ENCODE measurements at regions of chr6 and their contacts with region 1.

Region 1: GRCh38 chr6:47097092-47097945 is 55.2 kb upstream of the ADGRF1 start:
- DNase-seq: peak; percentile 77
- H3K4me3 ChIP-seq: no peak overlapping the region
- H3K27ac ChIP-seq: no peak overlapping the region
- H3K4me1 ChIP-seq: peaks cover 8% of the 10 kb centered on the region
- H3K27me3 ChIP-seq: no peaks in the 10 kb centered on the region
- CTCF ChIP-seq: peak; percentile 58 to 62
- POLR2A ChIP-seq: no peak

Region 2: DNA sequence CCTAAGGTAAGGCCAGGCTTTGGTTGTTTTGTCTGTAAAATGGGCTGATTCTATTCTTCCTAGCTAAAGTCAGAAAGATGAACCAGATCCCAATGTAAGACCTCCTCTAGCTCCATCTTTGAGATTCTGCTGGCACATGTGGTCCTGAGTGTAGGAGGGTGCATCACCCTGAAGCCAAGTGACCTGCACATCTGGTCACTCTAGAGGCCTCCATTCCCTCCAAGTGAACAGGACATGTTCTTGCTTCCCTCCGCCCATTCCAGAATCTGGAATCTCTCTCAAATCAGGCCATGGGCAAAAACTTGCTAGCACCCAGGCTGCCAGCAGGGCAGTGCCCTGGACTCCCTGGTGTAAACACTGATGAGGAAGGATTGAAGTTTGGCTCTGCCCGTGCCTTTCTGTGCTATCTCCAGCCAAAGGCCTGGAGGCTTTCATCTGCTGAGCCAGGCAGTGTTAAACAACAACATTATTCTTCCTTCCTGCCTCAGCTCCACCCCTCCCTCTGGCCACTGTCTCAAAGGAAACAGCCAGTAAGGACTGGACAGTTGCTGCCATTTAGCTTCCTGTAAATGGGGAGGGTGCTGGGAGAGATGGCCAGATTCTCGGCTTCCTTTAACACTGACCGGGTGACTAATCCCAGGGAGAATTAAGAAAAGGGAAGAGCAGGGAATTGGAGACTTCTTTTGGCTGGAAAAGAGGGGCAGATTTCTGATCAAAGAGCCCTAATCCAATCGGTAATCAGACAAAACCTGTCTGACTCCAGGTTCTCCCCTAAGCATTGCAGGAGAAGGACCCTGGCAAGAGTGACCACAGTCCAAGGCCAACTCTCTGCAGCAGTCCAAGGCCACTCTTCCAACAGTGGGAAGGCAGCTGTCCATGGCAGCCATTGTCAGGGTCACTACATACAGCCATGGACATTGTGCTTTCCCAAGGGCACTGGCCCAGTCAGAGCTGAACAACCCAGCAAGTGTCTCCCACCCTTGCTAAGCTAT is 35.7 kb before region 1 on chr6:
- CTCF ChIA-PET with region 1: no interaction called
- POLR2A ChIA-PET with region 1: no interaction called
- dilution Hi-C with region 1: no loop called
- intact Hi-C with region 1: no loop called
- DNase-seq: peak; percentile 50
- H3K4me3 ChIP-seq: no peak overlapping the region
- H3K27ac ChIP-seq: no peak overlapping the region
- H3K4me1 ChIP-seq: peaks cover 11% of the 10 kb centered on the region
- H3K27me3 ChIP-seq: no peaks in the 10 kb centered on the region
- CTCF ChIP-seq: no peak
- POLR2A ChIP-seq: no peak

Region 3: DNA sequence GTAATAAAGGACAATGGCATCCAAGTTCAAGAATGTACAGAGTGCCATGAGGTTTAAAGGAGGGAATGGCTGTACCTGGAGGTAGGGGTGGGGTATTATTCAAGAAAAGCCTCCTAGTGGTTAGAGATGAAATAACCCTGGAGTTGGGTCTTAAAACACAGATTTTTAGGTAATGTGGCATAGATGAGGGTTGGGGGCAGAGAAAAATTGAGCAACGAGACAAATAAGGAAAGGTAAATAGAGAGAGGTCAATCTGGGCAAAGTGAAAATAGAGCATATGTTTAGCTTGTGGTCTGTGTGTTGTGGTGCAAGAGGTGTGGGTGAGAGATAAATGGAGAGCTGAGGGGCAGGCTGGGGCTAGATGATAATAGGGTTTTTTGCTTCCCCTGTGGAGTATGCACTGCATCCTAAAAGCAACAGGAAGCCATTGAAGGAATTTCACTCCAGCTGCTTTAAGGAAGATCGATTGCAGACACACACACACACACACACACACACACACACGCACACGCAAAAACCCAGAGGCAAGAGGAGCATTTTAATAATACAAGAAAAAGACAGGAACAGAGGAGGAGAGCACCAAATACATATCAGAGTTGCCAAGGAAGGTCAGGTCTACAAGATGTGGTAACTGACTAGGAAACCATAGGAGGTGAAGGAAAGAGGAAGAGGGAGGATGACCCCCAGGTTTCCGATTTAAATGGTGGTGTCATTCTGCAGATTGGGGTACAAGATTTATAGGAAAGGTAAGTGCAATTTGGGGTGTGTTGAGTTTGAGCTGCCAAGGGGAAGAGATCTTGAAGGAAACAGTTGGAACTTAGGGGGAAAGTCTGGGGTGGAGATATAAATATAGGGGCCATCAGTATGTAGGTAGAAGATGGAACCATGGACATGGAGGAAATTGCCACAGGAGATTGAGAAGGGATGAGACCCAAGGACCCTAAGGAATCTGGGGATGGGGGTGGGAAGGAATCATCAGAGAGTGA is 23.9 kb before region 1 on chr6:
- CTCF ChIA-PET with region 1: no interaction called
- POLR2A ChIA-PET with region 1: no interaction called
- dilution Hi-C with region 1: no loop called
- intact Hi-C with region 1: no loop called
- DNase-seq: no peak
- H3K4me3 ChIP-seq: no peak overlapping the region
- H3K27ac ChIP-seq: no peak overlapping the region
- H3K4me1 ChIP-seq: no peaks in the 10 kb centered on the region
- H3K27me3 ChIP-seq: peaks cover 7 to 15% of the 10 kb centered on the region in 2 experiments
- CTCF ChIP-seq: peak; percentile 20 to 25
- POLR2A ChIP-seq: no peak

Region 4: GRCh38 chr6:47134476-47135189 is 37.3 kb after region 1 on chr6:
- CTCF ChIA-PET with region 1: interaction called, 5 read pairs
- POLR2A ChIA-PET with region 1: interaction called, 3 read pairs
- dilution Hi-C with region 1: no loop called
- intact Hi-C with region 1: loop called (anchors 2 kb)
- DNase-seq: peak; percentile 92
- H3K4me3 ChIP-seq: peak overlapping the region in 1 of 3 experiments; percentile 34
- H3K27ac ChIP-seq: peak overlapping the region; percentile 94
- H3K4me1 ChIP-seq: peaks cover 26% of the 10 kb centered on the region
- H3K27me3 ChIP-seq: no peaks in the 10 kb centered on the region
- CTCF ChIP-seq: no peak
- POLR2A ChIP-seq: no peak

Region 5: DNA sequence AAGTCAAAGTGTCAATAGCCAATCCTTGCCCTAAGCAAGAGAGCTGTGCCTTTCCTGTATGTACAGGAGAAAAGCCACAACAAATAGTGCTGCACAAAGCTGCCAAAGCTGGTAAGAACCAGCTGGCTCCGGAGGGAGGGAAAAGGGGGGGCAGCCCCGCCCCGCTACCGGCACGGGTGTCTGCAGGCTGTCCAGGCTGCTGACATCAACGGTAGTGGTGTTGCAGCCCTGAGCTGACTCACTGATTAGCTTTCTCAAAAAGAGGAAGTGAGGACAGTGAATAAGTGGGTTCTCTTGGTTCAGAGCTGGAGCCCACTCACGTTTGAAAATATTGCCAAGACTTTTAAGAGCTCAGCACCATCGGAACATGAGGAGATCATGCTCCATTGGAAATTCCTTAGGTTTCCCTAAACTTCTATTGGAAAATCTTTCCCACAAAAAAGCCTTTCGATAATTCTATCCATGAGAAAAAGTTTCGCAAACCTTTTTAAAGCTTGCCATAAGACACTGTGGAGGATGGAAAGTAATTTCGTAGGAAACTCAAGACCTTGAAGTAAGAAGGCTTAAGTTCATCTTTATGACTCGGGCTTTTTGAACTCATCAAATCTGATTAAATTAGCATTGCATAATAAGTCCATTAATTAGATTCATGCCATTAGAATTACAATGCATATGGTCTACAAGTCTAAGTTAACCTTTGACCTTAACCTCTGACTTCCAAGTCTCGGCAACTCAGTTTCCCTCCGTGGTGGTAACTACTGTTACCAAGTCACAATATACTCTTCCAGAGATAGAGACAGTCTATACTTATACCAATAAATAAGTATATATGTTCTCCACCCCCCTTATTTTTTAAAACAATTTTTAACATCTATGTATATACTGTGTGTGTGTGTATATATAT is 145.4 kb after region 1 on chr6:
- CTCF ChIA-PET with region 1: interaction called, 4 read pairs
- POLR2A ChIA-PET with region 1: no interaction called
- dilution Hi-C with region 1: loop called (anchors 25 kb)
- intact Hi-C with region 1: loop called (anchors 5 kb)
- DNase-seq: peak; percentile 95
- H3K4me3 ChIP-seq: no peak overlapping the region
- H3K27ac ChIP-seq: peak overlapping the region; percentile 51
- H3K4me1 ChIP-seq: peaks cover 14% of the 10 kb centered on the region
- H3K27me3 ChIP-seq: no peaks in the 10 kb centered on the region
- CTCF ChIP-seq: no peak
- POLR2A ChIP-seq: no peak

Region 6: GRCh38 chr6:47264775-47265184 is 167.5 kb after region 1 on chr6:
- CTCF ChIA-PET with region 1: interaction called, 3 read pairs
- POLR2A ChIA-PET with region 1: no interaction called
- dilution Hi-C with region 1: no loop called
- intact Hi-C with region 1: loop called (anchors 1 kb)
- DNase-seq: peak; percentile 97
- H3K4me3 ChIP-seq: no peak overlapping the region
- H3K27ac ChIP-seq: peak overlapping the region; percentile 76
- H3K4me1 ChIP-seq: peaks cover 63% of the 10 kb centered on the region
- H3K27me3 ChIP-seq: no peaks in the 10 kb centered on the region
- CTCF ChIP-seq: no peak
- POLR2A ChIP-seq: no peak

Region 7: GRCh38 chr6:47428746-47429664 is 331.7 kb after region 1 on chr6:
- CTCF ChIA-PET with region 1: no interaction called
- POLR2A ChIA-PET with region 1: no interaction called
- dilution Hi-C with region 1: no loop called
- intact Hi-C with region 1: no loop called
- DNase-seq: no peak
- H3K4me3 ChIP-seq: no peak overlapping the region
- H3K27ac ChIP-seq: no peak overlapping the region
- H3K4me1 ChIP-seq: no peaks in the 10 kb centered on the region
- H3K27me3 ChIP-seq: peaks cover 0 to 2% of the 10 kb centered on the region in 2 experiments
- CTCF ChIP-seq: no peak
- POLR2A ChIP-seq: no peak

Region 8: DNA sequence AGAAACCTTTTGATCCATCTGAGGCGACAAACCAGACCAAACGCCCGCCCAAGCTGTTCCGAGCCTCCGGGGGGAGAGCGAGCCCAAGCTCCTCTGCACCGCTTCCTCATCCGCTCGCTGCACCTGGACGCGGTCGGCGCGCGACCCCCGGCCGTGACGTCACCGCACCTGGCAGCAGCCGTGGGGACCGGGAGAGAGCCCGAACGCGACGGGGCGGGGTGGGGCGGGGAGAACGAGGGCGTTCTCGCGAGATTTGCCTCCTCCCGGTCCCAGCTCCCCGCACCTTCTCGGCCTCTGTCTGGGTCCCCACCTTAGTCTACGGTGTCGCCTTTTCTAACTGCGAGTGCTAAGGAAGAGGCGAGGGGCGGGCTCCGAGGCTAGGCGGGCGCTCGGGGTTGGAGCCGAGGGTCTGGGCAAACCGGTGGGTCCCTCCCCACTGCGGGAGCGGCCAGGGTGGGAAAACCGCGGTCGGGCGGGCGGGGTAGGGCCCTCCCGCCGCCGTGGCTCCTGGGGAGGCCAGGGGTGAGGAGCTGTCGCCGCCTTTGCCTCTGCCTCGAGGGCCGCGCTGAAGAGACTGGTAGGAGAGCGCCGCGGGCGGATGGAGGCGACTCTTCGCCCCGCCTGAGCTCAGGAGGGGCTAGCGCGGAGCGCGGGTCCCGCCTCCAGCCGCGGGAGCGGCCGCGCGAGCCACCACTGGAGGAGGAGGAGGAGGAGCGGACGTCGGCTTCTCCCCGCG is 380.3 kb after region 1 on chr6 and contains the start of gene CD2AP:
- CTCF ChIA-PET with region 1: no interaction called
- POLR2A ChIA-PET with region 1: no interaction called
- dilution Hi-C with region 1: no loop called
- intact Hi-C with region 1: loop called (anchors 5 kb)
- DNase-seq: peak; percentile 82
- H3K4me3 ChIP-seq: peak within 1 kb of the TSS; percentile 62 to 92 (median 85)
- H3K27ac ChIP-seq: peak within 1 kb of the TSS; percentile 71
- H3K4me1 ChIP-seq: peaks cover 28% of the 10 kb centered on the region
- H3K27me3 ChIP-seq: no peaks in the 10 kb centered on the region
- CTCF ChIP-seq: peak in 1 of 2 donors; percentile 7
- POLR2A ChIP-seq: peak; percentile 68
- total RNA-seq, gene CD2AP: 37.3 and 39.8 TPM in 2 replicates

Measured in endothelial cell of umbilical vein (primary cell).